H1 (cell line): ENCODE measurements at regions of chr12 and their contacts with region 1.

Region 1: DNA sequence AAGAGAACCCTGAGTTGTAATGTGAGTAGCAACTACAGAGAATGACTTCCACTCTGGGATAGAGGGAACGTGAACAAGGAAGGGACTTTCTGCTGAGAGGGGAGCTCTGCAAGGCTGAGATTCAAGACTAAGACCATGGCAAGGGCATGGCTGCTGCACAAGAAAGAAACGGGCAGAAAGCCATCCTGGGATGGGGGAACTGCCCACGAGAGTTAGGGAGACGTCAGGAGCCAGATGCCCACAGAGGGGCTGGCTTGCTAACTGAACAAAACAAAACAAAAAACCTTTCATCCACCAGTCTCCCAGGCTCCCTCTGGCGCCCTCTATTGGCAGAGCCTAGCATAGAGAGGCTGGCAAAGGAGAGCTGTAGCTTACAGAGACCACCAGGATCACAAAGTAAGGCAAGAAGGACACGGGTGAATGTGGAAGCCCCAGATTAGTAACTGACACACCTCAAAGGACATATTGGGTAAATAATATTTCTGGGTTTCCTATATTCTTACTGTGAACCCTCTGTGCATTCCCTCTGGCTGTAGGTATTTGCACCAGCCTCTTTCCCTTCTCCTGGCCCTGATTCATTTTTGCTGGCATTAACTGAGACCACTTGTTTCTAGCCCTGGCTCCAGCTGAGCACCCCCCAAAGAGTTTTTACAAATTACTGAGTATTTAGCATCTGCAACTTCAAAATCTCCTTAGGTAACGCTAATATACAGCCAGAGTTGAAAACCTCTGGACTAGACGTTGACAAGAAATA is 338.3 kb downstream of the EMP1 start:
- DNase-seq: peak; percentile 46 to 99
- H3K4me3 ChIP-seq: peak overlapping the region in 2 of 4 experiments; percentile 33 to 42; a peak in 4 of 8 replicates
- H3K27ac ChIP-seq: no peak overlapping the region
- H3K4me1 ChIP-seq: peaks cover 4 to 7% (median 4%) of the 10 kb centered on the region in 4 experiments
- H3K27me3 ChIP-seq: no peaks in the 10 kb centered on the region; a peak in 1 of 7 replicates
- CTCF ChIP-seq: peak; percentile 67 to 96 (median 93)
- EP300 ChIP-seq: no peak
- POLR2A ChIP-seq: peak in 1 of 2 experiments; percentile 26; a peak in 1 of 3 replicates
- RAD21 ChIP-seq: peak; percentile 81 to 90

Region 2: DNA sequence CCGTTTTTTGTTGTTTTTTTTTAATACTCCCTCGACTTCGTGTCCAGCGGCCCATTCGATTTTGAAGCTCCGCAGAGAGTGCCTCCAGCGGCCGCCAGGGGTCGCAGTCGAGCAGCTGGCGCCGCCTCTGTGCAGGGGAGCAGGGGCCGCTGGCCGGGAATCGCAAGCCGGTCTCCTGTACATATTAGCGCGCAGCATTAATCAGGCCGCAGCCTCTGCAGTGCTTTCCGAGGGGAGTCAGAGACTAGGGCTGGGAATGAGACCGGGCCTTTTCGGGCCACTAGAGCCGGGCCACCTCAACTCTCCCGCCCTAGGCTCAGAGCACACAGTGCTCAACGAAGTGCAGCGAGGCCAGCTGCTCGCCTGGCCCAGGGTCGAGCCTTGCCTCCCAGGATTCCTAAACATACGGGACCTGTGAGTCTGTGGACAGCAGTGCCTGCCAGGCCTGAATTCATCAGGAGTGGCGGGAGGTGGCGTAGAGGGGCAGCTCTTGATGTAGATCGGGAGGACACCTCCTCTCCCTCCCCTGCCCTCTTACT is 256.5 kb before region 1 on chr12:
- CTCF ChIA-PET with region 1: interaction called, 21 read pairs
- POLR2A ChIA-PET with region 1: no interaction called
- DNase-seq: peak; percentile 47 to 88
- H3K4me3 ChIP-seq: no peak overlapping the region
- H3K27ac ChIP-seq: no peak overlapping the region
- H3K4me1 ChIP-seq: peaks cover 0 to 12% (median 3%) of the 10 kb centered on the region in 4 experiments; a peak in 3 of 7 replicates
- H3K27me3 ChIP-seq: peaks cover 0 to 8% (median 4%) of the 10 kb centered on the region in 4 experiments; a peak in 5 of 7 replicates
- CTCF ChIP-seq: peak; percentile 82 to 92 (median 84)
- EP300 ChIP-seq: no peak
- POLR2A ChIP-seq: no peak
- RAD21 ChIP-seq: peak; percentile 86 to 89

Region 3: GRCh38 chr12:13367973-13368372 is 166.8 kb before region 1 on chr12:
- CTCF ChIA-PET with region 1: interaction called, 10 read pairs
- POLR2A ChIA-PET with region 1: no interaction called
- DNase-seq: peak in 1 of 2 experiments; percentile 32
- H3K4me3 ChIP-seq: no peak overlapping the region
- H3K27ac ChIP-seq: no peak overlapping the region
- H3K4me1 ChIP-seq: no peaks in the 10 kb centered on the region
- H3K27me3 ChIP-seq: no peaks in the 10 kb centered on the region
- CTCF ChIP-seq: no peak
- EP300 ChIP-seq: no peak
- POLR2A ChIP-seq: no peak
- RAD21 ChIP-seq: no peak

Region 4: GRCh38 chr12:13546231-13546630 is 11.4 kb after region 1 on chr12:
- CTCF ChIA-PET with region 1: interaction called, 21 read pairs
- POLR2A ChIA-PET with region 1: no interaction called
- DNase-seq: no peak
- H3K4me3 ChIP-seq: no peak overlapping the region
- H3K27ac ChIP-seq: no peak overlapping the region
- H3K4me1 ChIP-seq: no peaks in the 10 kb centered on the region
- H3K27me3 ChIP-seq: no peaks in the 10 kb centered on the region
- CTCF ChIP-seq: no peak
- EP300 ChIP-seq: no peak
- POLR2A ChIP-seq: no peak
- RAD21 ChIP-seq: no peak

Region 5: GRCh38 chr12:13661005-13661887 is 126.4 kb after region 1 on chr12:
- CTCF ChIA-PET with region 1: interaction called, 16 read pairs
- POLR2A ChIA-PET with region 1: no interaction called
- DNase-seq: peak; percentile 15 to 63
- H3K4me3 ChIP-seq: no peak overlapping the region
- H3K27ac ChIP-seq: no peak overlapping the region
- H3K4me1 ChIP-seq: no peaks in the 10 kb centered on the region
- H3K27me3 ChIP-seq: no peaks in the 10 kb centered on the region
- CTCF ChIP-seq: peak; percentile 63 to 85 (median 76)
- EP300 ChIP-seq: no peak
- POLR2A ChIP-seq: no peak
- RAD21 ChIP-seq: peak; percentile 66 to 80